Transverse colon (tissue), 4 donors: ENCODE measurements at regions of chr4 and their contacts with region 1.

Region 1: GRCh38 chr4:158775091-158775651 is 6.3 kb downstream of the FNIP2 start:
- DNase-seq: no peak
- H3K4me3 ChIP-seq: no peak overlapping the region
- H3K27ac ChIP-seq: peak overlapping the region; percentile 52 to 73 (median 68)
- H3K4me1 ChIP-seq: peaks cover 26 to 95% (median 67%) of the 10 kb centered on the region in 4 donors
- H3K27me3 ChIP-seq: no peaks in the 10 kb centered on the region
- CTCF ChIP-seq: no peak
- EP300 ChIP-seq: no peak
- POLR2A ChIP-seq: no peak

Region 2: GRCh38 chr4:158786121-158786601 is 11.0 kb after region 1 on chr4:
- in situ Hi-C with region 1: no loop called
- intact Hi-C with region 1: no loop called
- DNase-seq: no peak
- H3K4me3 ChIP-seq: no peak overlapping the region
- H3K27ac ChIP-seq: peak overlapping the region; percentile 48 to 73 (median 66)
- H3K4me1 ChIP-seq: peaks cover 27 to 77% (median 68%) of the 10 kb centered on the region in 4 donors
- H3K27me3 ChIP-seq: no peaks in the 10 kb centered on the region
- CTCF ChIP-seq: no peak
- EP300 ChIP-seq: no peak
- POLR2A ChIP-seq: no peak

Region 3: DNA sequence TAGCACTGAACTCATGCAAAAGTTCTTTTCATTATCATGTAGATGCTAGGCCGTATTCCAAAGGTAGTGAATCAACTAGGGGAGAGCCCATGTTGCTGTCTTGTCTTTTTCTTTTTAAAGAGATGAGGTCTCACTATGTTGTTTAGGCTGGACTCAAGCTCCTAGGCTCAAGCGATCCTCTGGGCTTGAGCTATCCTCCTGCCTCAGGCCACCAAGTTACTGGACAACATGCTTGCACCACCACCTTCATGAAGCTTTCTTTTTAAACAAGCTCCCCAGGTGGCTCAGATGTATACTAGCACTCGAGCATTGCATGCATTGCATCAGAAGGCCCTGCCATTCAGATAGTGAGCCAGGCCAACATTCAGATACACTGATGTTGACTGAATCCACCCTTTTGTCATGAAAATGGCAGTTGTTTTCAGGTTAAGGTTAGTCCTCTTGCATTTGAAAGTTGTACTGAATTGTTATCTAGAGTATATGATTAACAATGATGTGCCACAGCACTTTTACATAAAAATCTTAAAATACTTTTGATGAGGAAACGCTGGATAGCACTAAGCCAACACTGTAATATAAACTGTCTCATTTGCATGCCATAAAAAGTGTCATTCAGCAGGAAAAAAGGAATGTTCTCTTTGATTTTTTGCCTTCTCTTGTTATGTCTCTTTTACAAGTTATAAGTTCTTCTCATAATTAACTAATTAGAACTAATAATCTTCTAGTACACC is 70.3 kb after region 1 on chr4:
- in situ Hi-C with region 1: no loop called
- intact Hi-C with region 1: loop called (anchors 2 kb)
- DNase-seq: no peak
- H3K4me3 ChIP-seq: no peak overlapping the region
- H3K27ac ChIP-seq: no peak overlapping the region
- H3K4me1 ChIP-seq: peaks cover 0 to 15% (median under 1%) of the 10 kb centered on the region in 4 donors
- H3K27me3 ChIP-seq: no peaks in the 10 kb centered on the region
- CTCF ChIP-seq: no peak
- EP300 ChIP-seq: no peak
- POLR2A ChIP-seq: no peak

Region 4: GRCh38 chr4:159097785-159098184 is 322.6 kb after region 1 on chr4:
- in situ Hi-C with region 1: no loop called
- intact Hi-C with region 1: no loop called
- DNase-seq: no peak
- H3K4me3 ChIP-seq: no peak overlapping the region
- H3K27ac ChIP-seq: no peak overlapping the region
- H3K4me1 ChIP-seq: peaks cover 0 to 5% (median 0%) of the 10 kb centered on the region in 4 donors
- H3K27me3 ChIP-seq: no peaks in the 10 kb centered on the region
- CTCF ChIP-seq: no peak
- EP300 ChIP-seq: no peak
- POLR2A ChIP-seq: no peak